Dorsolateral prefrontal cortex (tissue), 120 donors: ENCODE measurements at regions of chr9 and their contacts with region 1.

Region 1: DNA sequence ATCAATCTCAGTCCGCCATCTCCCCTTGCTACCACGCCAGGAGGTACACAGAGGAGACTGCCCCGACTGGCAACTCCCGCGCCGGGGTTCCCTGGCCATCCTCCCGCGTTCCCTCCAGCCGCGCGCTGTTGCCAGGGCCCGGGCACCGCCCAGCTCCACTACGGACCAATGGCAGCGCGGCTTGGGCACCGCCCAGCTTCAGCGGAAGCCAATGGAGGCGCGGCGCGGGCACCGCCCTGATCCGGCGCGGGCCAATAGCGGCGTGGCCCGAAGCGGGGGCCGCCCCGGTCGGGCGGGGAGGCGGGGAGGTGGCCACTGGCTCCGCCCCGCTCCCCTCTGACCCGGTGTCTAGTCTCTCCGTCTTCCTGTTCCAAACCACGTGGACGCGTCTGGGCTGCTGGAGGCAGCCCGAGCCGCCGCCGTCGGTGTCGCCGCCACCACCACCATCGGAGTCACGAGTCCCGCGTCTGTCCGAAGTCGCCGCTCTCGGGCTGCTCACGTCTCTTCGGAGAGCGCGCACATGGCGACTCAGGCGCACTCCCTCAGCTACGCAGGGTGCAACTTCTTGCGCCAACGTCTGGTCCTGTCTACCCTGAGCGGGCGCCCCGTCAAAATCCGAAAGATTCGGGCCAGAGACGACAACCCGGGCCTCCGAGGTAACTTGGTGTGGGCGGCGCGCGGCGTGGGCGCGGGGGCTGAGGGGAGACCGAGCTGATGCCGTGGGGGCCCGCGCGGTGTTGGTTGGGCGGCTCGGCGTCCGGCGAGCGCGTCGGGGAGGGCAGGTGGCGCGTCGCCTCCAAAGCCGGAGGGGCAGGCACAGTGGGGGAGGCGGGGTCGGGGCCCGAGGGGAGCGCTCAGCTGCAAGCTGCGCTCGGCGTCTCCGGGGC is at the start of gene RCL1:
- DNase-seq: peak; percentile 94 to 100 (median 97)
- H3K4me3 ChIP-seq: peak within 1 kb of the TSS; percentile 67 to 99 (median 92)
- H3K27ac ChIP-seq: peak within 1 kb of the TSS; percentile 16 to 93 (median 82)
- H3K27me3 ChIP-seq: no peaks in the 10 kb centered on the region
- CTCF ChIP-seq: peak in 16 of 56 donors; percentile 8 to 49 (median 17)
- total RNA-seq, gene RCL1: 17.9 to 36.6 (median 25.8) TPM

Region 2: GRCh38 chr9:5437254-5438216 is 644.7 kb after region 1 on chr9 and contains the start of gene PLGRKT:
- intact Hi-C with region 1: loop called in 1 of 2 experiments (anchors 5 kb)
- DNase-seq: peak; percentile 93 to 99 (median 97)
- H3K4me3 ChIP-seq: peak within 1 kb of the TSS; percentile 58 to 98 (median 83)
- H3K27ac ChIP-seq: peak within 1 kb of the TSS; percentile 73 to 99 (median 93)
- H3K27me3 ChIP-seq: no peaks in the 10 kb centered on the region
- CTCF ChIP-seq: peak in 51 of 56 donors; percentile 6 to 66 (median 46)
- total RNA-seq, gene PLGRKT: 4.1 to 17.5 (median 10.1) TPM